ENCODE measurements at regions of chr6 and their contacts with region 1.

Region 1: DNA sequence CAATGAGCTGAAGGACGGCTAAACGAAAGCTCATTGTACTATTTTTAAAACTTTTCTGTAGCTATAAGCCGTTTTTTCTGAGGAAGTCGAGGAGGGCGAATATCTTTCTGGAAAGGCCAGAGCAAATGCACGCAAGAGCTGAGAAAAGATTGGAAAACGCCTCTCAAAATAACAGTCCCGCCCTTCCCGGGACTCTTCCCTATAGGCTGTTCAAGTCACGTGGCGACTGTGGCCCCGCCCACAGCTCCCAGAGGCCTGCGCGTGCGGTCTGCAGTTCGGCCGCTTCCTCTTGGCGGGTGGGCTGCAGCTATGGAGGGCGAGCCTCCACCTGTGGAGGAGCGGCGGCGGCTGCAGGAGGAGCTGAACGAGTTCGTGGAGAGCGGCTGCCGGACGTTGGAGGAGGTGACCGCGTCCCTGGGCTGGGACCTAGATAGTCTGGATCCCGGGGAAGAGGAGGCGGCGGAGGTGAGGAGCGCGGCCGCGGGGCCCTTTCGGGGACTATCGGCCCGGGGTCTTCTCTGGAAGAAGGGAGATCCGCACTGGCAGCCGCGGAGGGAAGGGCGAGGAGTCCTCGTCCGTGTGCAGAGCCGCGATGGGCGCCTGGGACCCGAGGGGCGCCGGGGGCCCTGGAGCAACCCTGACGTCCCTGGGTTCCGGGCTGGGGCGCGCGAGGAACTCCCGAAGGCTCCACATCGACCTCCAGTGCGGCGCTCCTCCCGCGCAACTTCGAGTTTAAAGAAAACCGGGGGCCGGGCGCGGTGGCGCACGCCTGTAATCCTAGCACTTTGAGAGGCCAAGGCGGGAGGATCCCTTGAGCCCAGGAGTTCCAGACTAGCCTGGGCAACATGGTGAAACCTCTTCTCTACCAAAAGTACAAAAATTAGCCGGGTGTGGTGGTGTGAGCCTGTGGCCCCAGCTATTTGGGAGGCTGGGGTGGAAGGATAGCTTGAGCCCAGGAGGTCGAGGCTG is at the start of gene SNRNP48:
- DNase-seq: peak; percentile 93
- H3K4me3 ChIP-seq: peak within 1 kb of the TSS; percentile 79
- H3K27ac ChIP-seq: peak within 1 kb of the TSS; percentile 33
- H3K27me3 ChIP-seq: no peaks in the 10 kb centered on the region
- CTCF ChIP-seq: no peak

Region 2: DNA sequence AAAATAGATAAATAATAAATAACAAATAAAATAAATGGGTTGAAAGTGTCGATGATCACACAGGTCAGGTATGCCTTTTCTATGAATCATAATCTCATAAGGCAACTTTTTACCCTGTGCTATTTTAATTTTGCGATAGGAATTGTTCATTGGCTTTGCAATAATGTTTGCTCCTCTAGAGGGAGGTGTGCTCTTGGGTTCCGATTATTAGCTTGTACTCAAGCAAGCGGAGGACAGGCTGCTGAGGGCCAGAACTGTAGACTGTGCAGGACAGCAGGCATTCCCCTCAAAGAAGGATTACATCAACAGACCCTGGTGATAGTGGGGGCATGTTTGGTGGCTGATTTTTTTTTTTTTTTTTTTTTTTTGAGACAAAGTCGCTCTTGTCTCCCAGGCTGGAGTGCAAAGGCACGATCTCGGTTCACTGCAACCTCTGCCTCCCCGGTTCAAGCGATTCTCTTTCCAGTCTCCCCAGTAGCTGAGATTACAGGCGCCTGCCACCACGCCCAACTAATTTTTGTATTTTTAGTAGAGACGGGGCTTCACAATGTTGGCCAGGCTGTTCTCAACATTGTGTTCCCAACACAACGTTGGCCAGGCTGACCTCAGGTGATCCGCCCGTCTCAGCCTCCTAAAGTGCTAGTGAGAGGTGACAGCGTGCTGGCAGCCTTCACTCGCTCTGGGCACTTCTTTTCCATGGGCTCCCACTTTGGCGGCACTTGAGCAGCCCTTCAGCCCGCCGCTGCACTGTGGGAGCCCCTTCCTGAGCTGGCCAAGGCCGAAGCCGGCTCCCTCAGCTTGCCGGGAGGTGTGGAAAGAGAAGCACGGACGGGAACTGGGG is 165.0 kb before region 1 on chr6:
- in situ Hi-C with region 1: loop called (anchors 25 kb)
- DNase-seq: peak; percentile 57
- H3K4me3 ChIP-seq: no peak overlapping the region
- H3K27ac ChIP-seq: no peak overlapping the region
- H3K27me3 ChIP-seq: no peaks in the 10 kb centered on the region
- CTCF ChIP-seq: peak; percentile 71

Region 3: DNA sequence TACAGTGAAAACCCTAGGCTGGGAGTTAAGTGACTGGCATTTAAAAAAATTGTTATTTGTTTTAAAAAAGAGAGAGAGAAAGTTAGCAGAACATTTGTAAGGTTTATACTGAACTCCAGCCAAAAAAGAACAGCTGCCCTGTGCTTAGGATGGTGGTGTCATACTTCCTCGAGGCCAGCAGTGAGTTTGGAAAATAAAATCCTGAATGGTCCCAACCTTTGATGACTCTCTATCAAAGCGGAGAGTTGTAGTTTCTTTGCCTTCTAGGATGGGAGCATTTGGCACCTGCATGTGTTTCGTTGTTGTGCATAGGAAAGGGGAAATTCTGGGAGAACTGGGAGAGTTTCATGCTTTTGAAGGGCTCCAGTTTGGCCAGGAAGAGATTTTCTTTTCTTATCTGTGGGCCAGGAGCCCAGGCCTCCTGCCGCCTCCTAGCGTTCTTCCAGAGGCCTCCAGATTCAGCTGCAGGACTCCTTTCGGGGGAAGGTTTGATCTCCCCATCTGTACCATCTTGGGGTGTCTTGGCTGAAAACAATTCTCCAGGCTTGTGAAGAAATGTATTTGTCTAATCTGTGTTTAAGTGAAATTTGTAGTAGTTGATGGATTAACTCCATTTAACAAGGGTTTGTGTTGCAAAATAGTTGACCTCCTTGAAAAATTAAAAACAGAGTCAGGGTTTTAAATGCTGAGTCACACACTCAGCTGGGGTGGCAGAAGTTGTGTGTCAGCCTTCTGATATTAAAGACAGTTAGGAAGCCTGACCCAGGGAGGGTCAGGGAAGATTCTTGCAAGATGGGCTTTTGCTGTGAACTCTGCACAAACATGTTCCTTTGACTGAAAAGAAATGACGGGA is 257.0 kb after region 1 on chr6:
- in situ Hi-C with region 1: no loop called
- DNase-seq: peak; percentile 11
- H3K4me3 ChIP-seq: no peak overlapping the region
- H3K27ac ChIP-seq: no peak overlapping the region
- H3K27me3 ChIP-seq: no peaks in the 10 kb centered on the region
- CTCF ChIP-seq: peak; percentile 39